Activated T-helper 2 cell treated with anti-CD3 and anti-CD28 coated beads, Interferon-gamma antibody, Interleukin-2, Interleukin-4, amounts not matched to agents 10 μg/mL and 5 μg/mL and 100 μg/mL, durations not matched to agents 14 hours and 24 hours and 36 hours (primary cell): ENCODE measurements at regions of chr2 and their contacts with region 1.

Region 1: DNA sequence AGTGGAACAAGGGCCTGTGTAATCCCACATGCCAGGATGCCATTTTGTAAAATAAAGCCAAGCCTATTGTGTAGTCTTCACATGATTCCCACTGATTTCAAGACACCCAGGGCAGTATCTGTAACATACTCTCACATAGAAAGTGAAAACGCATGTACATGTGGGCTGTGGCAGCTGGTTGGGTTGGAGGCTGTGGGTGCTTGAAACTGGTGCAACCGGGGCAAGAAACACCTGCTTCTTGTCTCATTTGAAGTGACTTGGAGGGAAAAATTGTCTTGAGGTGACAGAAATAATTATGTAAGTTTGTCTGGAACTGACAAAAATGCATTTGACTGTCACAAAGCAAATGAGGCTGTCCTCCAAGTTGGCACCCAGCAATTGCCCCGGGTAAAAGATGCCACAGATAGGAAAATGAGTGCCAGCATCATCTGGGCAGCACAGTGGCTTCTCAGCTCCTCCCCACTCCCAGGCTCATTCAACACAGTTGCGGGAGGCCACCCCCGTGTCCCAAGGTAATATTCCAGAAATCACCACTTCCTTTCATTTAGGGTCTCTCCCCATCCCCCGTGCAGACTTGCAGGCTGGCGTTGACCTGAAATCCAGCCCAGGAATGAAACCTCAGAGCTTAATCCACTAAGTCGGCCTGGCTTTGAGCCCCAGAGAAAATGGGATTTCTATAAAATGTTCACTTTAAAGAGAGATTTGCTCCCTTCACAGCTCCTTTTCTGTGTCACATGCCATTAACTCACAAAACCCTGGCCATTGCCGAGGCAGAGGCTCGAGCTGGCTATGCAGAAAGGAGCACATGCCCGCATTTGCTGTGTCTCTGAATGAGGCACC is 293.9 kb upstream of the PARD3B start:
- DNase-seq: no peak
- H3K4me3 Mint-ChIP-seq: no peak overlapping the region
- H3K27ac Mint-ChIP-seq: no peak overlapping the region
- H3K4me1 Mint-ChIP-seq: peaks cover 2% of the 10 kb centered on the region
- H3K27me3 Mint-ChIP-seq: peaks cover 22% of the 10 kb centered on the region

Region 2: GRCh38 chr2:204072443-204073324 is 178.7 kb before region 1 on chr2:
- intact Hi-C with region 1: loop called (anchors 10 kb)
- DNase-seq: peak; percentile 48
- H3K4me3 Mint-ChIP-seq: no peak overlapping the region
- H3K27ac Mint-ChIP-seq: no peak overlapping the region
- H3K4me1 Mint-ChIP-seq: peaks cover 11% of the 10 kb centered on the region
- H3K27me3 Mint-ChIP-seq: peaks cover 19% of the 10 kb centered on the region

Region 3: GRCh38 chr2:204491528-204491927 is 240.2 kb after region 1 on chr2:
- intact Hi-C with region 1: no loop called
- DNase-seq: no peak
- H3K4me3 Mint-ChIP-seq: no peak overlapping the region
- H3K27ac Mint-ChIP-seq: no peak overlapping the region
- H3K4me1 Mint-ChIP-seq: no peaks in the 10 kb centered on the region
- H3K27me3 Mint-ChIP-seq: peaks cover 7% of the 10 kb centered on the region